ENCODE measurements at regions of chr17 and their contacts with region 1.

Region 1: GRCh38 chr17:44767493-44767892 is 8.7 kb downstream of the ADAM11 start:
- DNase-seq: no peak
- H3K4me3 ChIP-seq: no peak overlapping the region
- H3K4me3 Mint-ChIP-seq: no peak overlapping the region
- H3K27ac ChIP-seq: no peak overlapping the region
- H3K27ac Mint-ChIP-seq: no peak overlapping the region
- H3K4me1 ChIP-seq: no peaks in the 10 kb centered on the region
- H3K4me1 Mint-ChIP-seq: peaks cover 0 to 2% (median 0%) of the 10 kb centered on the region in 4 donors
- H3K27me3 ChIP-seq: no peaks in the 10 kb centered on the region
- H3K27me3 Mint-ChIP-seq: peaks cover 14 to 21% of the 10 kb centered on the region in 2 donors

Region 2: GRCh38 chr17:43615330-43616028 is 1152.0 kb before region 1 on chr17:
- CTCF ChIA-PET with region 1: no interaction called
- POLR2A ChIA-PET with region 1: no interaction called
- intact Hi-C with region 1: loop called (anchors 10 kb)
- DNase-seq: no peak
- H3K4me3 ChIP-seq: no peak overlapping the region
- H3K4me3 Mint-ChIP-seq: no peak overlapping the region
- H3K27ac ChIP-seq: no peak overlapping the region
- H3K27ac Mint-ChIP-seq: no peak overlapping the region
- H3K4me1 ChIP-seq: no peaks in the 10 kb centered on the region
- H3K4me1 Mint-ChIP-seq: no peaks in the 10 kb centered on the region
- H3K27me3 ChIP-seq: no peaks in the 10 kb centered on the region
- H3K27me3 Mint-ChIP-seq: peaks cover 0 to 6% of the 10 kb centered on the region in 2 donors

Measured in CD4-positive, alpha-beta memory T cell (primary cell).